ENCODE measurements at regions of chr12 and their contacts with region 1.

Region 1: GRCh38 chr12:15220994-15221885 is at the start of gene RERG:
- DNase-seq: peak; percentile 82
- H3K4me3 Mint-ChIP-seq: peak within 1 kb of the TSS; percentile 80
- H3K27ac Mint-ChIP-seq: peak within 1 kb of the TSS; percentile 68
- H3K4me1 Mint-ChIP-seq: peaks cover 36% of the 10 kb centered on the region
- H3K27me3 Mint-ChIP-seq: no peaks in the 10 kb centered on the region
- CTCF ChIP-seq: peak; percentile 92
- total RNA-seq, gene RERG: 7.6 and 16.5 TPM in 2 replicates

Region 2: DNA sequence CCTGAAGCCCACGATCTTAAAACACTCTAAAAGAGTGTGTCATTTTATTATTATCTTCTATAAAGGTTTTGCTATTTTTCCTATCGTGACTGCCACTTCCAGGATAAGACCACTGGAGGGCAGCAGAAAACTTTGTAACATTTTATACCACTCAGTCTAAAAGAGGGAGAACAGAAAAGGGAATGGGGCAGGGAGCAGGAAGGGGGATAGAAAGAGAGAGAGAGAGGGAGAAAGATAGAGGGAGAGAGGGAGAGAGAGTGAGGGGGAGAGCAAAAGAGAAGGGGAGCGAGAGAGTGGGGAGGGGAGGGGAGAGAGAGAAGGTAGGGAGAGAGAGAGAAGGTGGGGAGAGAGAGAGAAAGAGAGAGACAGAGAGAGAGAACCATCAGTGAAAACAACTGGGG is 375.9 kb before region 1 on chr12:
- CTCF ChIA-PET with region 1: interaction called, 7 read pairs
- POLR2A ChIA-PET with region 1: interaction called, 3 read pairs
- intact Hi-C with region 1: loop called (anchors 1 kb)
- DNase-seq: peak; percentile 74
- H3K4me3 Mint-ChIP-seq: no peak overlapping the region
- H3K27ac Mint-ChIP-seq: peak overlapping the region; percentile 78
- H3K4me1 Mint-ChIP-seq: peaks cover 23% of the 10 kb centered on the region
- H3K27me3 Mint-ChIP-seq: no peaks in the 10 kb centered on the region
- CTCF ChIP-seq: peak; percentile 68

Region 3: GRCh38 chr12:15151161-15152120 is 69.8 kb before region 1 on chr12:
- CTCF ChIA-PET with region 1: interaction called, 228 read pairs
- POLR2A ChIA-PET with region 1: interaction called, 34 read pairs
- intact Hi-C with region 1: loop called (anchors 1 kb)
- DNase-seq: peak; percentile 61
- H3K4me3 Mint-ChIP-seq: no peak overlapping the region
- H3K27ac Mint-ChIP-seq: no peak overlapping the region
- H3K4me1 Mint-ChIP-seq: peaks cover 40% of the 10 kb centered on the region
- H3K27me3 Mint-ChIP-seq: no peaks in the 10 kb centered on the region
- CTCF ChIP-seq: peak; percentile 41

Region 4: GRCh38 chr12:15186597-15186996 is 34.6 kb before region 1 on chr12:
- CTCF ChIA-PET with region 1: interaction called, 22 read pairs
- POLR2A ChIA-PET with region 1: no interaction called
- intact Hi-C with region 1: no loop called
- DNase-seq: no peak
- H3K4me3 Mint-ChIP-seq: no peak overlapping the region
- H3K27ac Mint-ChIP-seq: no peak overlapping the region
- H3K4me1 Mint-ChIP-seq: peaks cover 9% of the 10 kb centered on the region
- H3K27me3 Mint-ChIP-seq: no peaks in the 10 kb centered on the region
- CTCF ChIP-seq: no peak

Region 5: GRCh38 chr12:15268927-15269552 is 47.8 kb after region 1 on chr12:
- CTCF ChIA-PET with region 1: interaction called, 109 read pairs
- POLR2A ChIA-PET with region 1: no interaction called
- intact Hi-C with region 1: no loop called
- DNase-seq: peak; percentile 85
- H3K4me3 Mint-ChIP-seq: no peak overlapping the region
- H3K27ac Mint-ChIP-seq: peak overlapping the region; percentile 70
- H3K4me1 Mint-ChIP-seq: peaks cover 19% of the 10 kb centered on the region
- H3K27me3 Mint-ChIP-seq: no peaks in the 10 kb centered on the region
- CTCF ChIP-seq: peak; percentile 83

Region 6: GRCh38 chr12:15423629-15424028 is 202.4 kb after region 1 on chr12:
- CTCF ChIA-PET with region 1: no interaction called
- POLR2A ChIA-PET with region 1: no interaction called
- intact Hi-C with region 1: no loop called
- DNase-seq: peak; percentile 73
- H3K4me3 Mint-ChIP-seq: no peak overlapping the region
- H3K27ac Mint-ChIP-seq: no peak overlapping the region
- H3K4me1 Mint-ChIP-seq: peaks cover 6% of the 10 kb centered on the region
- H3K27me3 Mint-ChIP-seq: no peaks in the 10 kb centered on the region
- CTCF ChIP-seq: no peak